HCT116 (cell line): ENCODE measurements at regions of chr1 and their contacts with region 1.

Region 1: GRCh38 chr1:119008483-119009311 is 20.6 kb upstream of the TBX15 start:
- DNase-seq: peak; percentile 7
- ATAC-seq: peak; percentile 68
- H3K4me3 ChIP-seq: no peak overlapping the region
- H3K27ac ChIP-seq: no peak overlapping the region
- H3K4me1 ChIP-seq: no peaks in the 10 kb centered on the region
- H3K27me3 ChIP-seq: no peaks in the 10 kb centered on the region
- CTCF ChIP-seq: peak; percentile 22 to 64 (median 53); a peak in 5 of 6 replicates
- POLR2A ChIP-seq: no peak
- RAD21 ChIP-seq: peak; percentile 62

Region 2: GRCh38 chr1:118077331-118078055 is 931.2 kb before region 1 on chr1:
- CTCF ChIA-PET with region 1: interaction called, 9 read pairs
- POLR2A ChIA-PET with region 1: no interaction called
- RAD21 ChIA-PET with region 1: no interaction called
- intact Hi-C with region 1: loop called (anchors 5 kb)
- DNase-seq: peak; percentile 40
- ATAC-seq: peak; percentile 38
- H3K4me3 ChIP-seq: no peak overlapping the region
- H3K27ac ChIP-seq: no peak overlapping the region
- H3K4me1 ChIP-seq: no peaks in the 10 kb centered on the region
- H3K27me3 ChIP-seq: peaks cover 12% of the 10 kb centered on the region; the same call in 1 of the 2 replicates
- CTCF ChIP-seq: peak; percentile 39 to 73 (median 42); a peak in 4 of 6 replicates
- POLR2A ChIP-seq: no peak
- RAD21 ChIP-seq: peak; percentile 62

Region 3: DNA sequence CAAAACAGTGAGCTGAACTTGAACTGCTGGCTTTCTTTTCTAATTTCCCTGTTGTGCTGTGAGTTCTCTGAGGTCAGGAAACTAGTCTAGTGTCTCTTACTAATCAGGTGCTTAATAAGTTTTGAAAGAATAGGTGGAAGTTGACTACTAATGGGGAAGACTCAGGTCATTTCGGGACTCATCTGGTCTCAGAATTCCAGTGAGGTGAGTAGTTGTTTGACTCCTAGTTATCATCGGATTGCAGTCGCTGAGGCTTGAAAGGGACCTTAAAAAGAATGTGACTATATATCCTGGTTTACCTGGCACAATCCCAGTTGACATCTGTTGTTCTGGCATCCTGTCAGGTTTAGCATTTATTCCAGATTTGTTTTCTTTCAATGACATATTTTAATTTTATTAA is 742.3 kb before region 1 on chr1:
- CTCF ChIA-PET with region 1: no interaction called
- POLR2A ChIA-PET with region 1: no interaction called
- RAD21 ChIA-PET with region 1: no interaction called
- intact Hi-C with region 1: no loop called
- DNase-seq: no peak
- ATAC-seq: no peak
- H3K4me3 ChIP-seq: no peak overlapping the region
- H3K27ac ChIP-seq: no peak overlapping the region
- H3K4me1 ChIP-seq: no peaks in the 10 kb centered on the region
- H3K27me3 ChIP-seq: no peaks in the 10 kb centered on the region; the same call in 1 of the 2 replicates
- CTCF ChIP-seq: no peak
- POLR2A ChIP-seq: no peak
- RAD21 ChIP-seq: no peak